SK-N-SH (cell line): ENCODE measurements at regions of chr11 and their contacts with region 1.

Region 1: DNA sequence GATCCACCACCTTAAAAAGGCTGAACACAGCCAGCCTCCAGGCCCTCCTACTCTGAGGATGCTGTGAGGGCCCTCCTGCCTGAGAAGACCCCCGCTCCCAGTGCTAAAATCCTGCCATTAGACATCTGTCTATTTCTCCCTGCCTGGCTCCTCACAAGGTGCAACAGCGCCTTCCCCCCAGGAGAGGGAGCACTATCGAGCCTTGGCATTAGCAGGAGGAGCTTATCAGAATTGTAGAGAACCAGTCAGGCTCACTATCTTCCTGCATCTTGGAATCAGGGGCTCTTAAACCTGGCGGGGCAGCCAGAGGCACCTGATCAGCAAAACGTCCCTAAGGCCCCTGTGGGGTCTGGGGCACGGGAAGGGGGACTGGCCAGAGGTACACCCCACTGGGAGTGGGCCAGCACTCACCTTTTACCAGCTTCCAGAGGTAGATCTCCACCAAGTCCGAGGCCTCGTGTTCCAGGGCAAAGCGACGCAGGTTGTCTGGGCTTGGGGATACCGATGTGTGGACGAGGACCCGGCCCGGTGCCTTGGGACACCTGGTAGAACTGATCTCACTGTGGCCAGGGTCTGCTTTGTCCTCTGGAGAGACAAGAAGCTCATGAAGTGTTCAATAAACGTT is 28.7 kb downstream of the CHRDL2 start:
- DNase-seq: peak; percentile 84
- H3K4me3 ChIP-seq: no peak overlapping the region; a peak in 1 of 4 replicates
- H3K27ac ChIP-seq: no peak overlapping the region
- H3K4me1 ChIP-seq: peaks cover 0 to 8% of the 10 kb centered on the region in 2 experiments; a peak in 1 of 4 replicates
- H3K27me3 ChIP-seq: no peaks in the 10 kb centered on the region
- CTCF ChIP-seq: peak; percentile 88
- EP300 ChIP-seq: no peak
- RAD21 ChIP-seq: peak; percentile 72

Region 2: GRCh38 chr11:74634537-74634936 is 68.0 kb before region 1 on chr11:
- CTCF ChIA-PET with region 1: interaction called, 14 read pairs
- POLR2A ChIA-PET with region 1: no interaction called
- DNase-seq: no peak
- H3K4me3 ChIP-seq: no peak overlapping the region
- H3K27ac ChIP-seq: no peak overlapping the region
- H3K4me1 ChIP-seq: peaks cover 0 to 14% of the 10 kb centered on the region in 2 experiments; a peak in 2 of 4 replicates
- H3K27me3 ChIP-seq: no peaks in the 10 kb centered on the region
- CTCF ChIP-seq: peak; percentile 48
- EP300 ChIP-seq: no peak
- RAD21 ChIP-seq: peak; percentile 48

Region 3: DNA sequence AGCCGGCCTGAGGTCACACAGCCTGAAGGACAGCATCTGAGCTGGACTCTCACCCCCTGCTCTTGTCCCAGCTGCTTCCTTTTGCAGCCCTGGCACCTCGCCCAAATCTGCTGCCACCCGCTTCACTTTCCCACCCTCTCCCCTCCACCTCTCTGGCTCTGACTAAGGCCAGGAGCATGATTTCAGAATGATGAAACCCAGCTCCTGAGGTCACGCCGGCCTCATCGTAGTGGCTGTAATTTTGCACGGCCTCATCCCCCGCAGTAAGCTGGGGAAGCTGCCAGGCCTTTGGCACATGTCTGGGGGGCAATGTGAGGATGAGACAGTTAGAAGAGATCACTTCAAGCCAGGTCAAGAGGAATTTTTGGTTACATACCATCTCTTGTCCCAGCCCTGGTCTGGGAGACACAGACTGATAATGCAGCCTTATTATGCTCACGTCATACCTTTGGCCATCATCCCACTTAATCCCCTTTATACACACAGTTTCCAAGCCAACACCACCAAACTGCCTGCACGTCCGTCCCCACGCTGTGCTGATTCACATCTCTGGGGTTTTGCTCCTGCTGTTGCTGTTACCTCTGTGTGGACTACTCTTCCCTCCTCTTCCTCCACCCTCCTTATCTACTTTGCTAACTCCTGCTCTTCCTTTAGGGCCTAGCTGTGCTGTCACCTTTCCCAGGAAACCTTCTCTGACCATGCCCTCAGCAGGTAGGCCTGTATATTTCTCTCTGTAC is 29.4 kb before region 1 on chr11:
- CTCF ChIA-PET with region 1: interaction called, 10 read pairs
- POLR2A ChIA-PET with region 1: no interaction called
- DNase-seq: peak; percentile 77
- H3K4me3 ChIP-seq: no peak overlapping the region
- H3K27ac ChIP-seq: peak overlapping the region; percentile 56 to 99
- H3K4me1 ChIP-seq: peaks cover 15 to 16% of the 10 kb centered on the region in 2 experiments
- H3K27me3 ChIP-seq: no peaks in the 10 kb centered on the region
- CTCF ChIP-seq: no peak
- EP300 ChIP-seq: peak; percentile 44 to 84; a peak in 1 of 4 replicates
- RAD21 ChIP-seq: no peak

Region 4: GRCh38 chr11:74683279-74683871 is 19.1 kb before region 1 on chr11:
- CTCF ChIA-PET with region 1: interaction called, 58 read pairs
- POLR2A ChIA-PET with region 1: no interaction called
- DNase-seq: peak; percentile 87
- H3K4me3 ChIP-seq: peak overlapping the region in 1 of 2 experiments; percentile 28; a peak in 2 of 4 replicates
- H3K27ac ChIP-seq: no peak overlapping the region
- H3K4me1 ChIP-seq: peaks cover 0 to 5% of the 10 kb centered on the region in 2 experiments; a peak in 1 of 4 replicates
- H3K27me3 ChIP-seq: no peaks in the 10 kb centered on the region
- CTCF ChIP-seq: peak; percentile 34
- EP300 ChIP-seq: no peak
- RAD21 ChIP-seq: no peak

Region 5: DNA sequence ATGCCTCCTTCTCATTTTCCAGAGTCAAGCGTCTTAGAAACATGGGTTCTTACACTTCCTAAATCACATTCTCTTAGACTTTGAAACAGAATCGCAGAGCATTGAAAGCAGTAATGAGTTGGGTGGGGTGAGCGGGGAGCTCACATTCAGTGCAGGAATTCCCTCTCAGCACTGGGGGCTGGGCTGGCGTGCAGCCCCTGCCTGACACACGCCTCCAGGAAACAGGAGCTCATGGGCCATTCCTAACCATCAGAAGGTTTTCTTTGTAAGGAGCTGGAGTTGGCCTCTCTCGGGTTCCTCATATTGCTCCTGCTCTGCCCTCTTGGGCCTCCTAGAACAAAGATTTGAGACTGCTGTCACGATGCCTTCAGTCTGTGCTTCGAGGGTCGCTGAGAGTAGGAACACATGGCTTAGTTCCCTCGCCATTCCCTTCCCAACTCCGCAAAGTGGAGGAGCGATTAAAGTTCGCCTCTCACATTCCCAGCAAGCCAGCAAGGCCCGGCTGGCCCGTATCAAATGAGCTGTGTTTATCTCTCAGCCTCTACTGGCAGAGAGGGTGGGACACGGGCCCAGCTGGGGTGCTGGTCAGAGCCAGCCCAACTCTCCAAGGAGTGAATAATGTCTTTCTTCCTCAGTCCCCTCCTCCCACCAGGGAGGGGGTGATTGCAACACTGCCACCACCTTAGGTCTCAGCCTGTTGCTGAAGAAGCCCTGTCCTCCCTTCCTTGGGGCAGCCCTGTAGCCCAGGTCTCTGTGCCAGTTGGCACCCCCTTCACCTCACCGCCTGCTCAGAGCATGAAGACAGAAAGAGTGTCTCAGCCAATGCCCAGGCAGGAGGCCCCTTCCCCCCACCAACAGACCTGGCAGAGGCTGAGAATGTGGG is 18.3 kb after region 1 on chr11:
- CTCF ChIA-PET with region 1: interaction called, 243 read pairs
- POLR2A ChIA-PET with region 1: no interaction called
- DNase-seq: no peak
- H3K4me3 ChIP-seq: no peak overlapping the region
- H3K27ac ChIP-seq: no peak overlapping the region
- H3K4me1 ChIP-seq: no peaks in the 10 kb centered on the region
- H3K27me3 ChIP-seq: no peaks in the 10 kb centered on the region
- CTCF ChIP-seq: no peak
- EP300 ChIP-seq: no peak
- RAD21 ChIP-seq: no peak

Region 6: DNA sequence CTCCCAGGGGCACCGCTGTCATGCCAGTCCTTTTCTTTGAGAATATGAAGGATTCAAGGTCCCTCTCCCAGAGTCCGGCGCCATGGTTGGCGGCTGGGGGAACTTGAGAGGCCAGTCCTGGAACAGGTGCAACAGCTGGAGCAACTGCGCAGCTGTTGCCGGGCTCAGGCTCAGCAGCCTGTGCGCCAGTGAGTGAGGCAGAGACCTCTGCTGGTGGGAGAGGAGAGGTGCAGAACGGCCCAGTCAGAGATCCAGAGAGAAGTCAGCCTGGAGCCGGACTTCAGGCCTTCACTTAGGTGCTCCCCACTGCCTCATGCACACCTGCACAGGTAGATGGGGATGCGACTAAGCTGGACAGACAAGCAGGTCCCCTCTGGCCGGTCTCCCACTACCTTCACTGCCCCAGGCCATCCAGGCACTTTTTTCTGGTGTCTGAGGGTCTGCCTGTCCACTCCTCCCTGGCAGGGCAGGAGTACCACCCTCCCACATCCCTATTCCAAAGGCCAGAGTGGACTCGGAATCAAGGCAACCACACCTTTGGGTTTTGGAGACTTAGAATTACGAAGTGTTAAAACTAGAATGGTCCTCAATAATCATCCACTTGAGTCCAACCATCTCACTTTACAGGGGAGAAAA is 24.2 kb after region 1 on chr11:
- CTCF ChIA-PET with region 1: interaction called, 243 read pairs
- POLR2A ChIA-PET with region 1: no interaction called
- DNase-seq: peak; percentile 87
- H3K4me3 ChIP-seq: peak overlapping the region in 1 of 2 experiments; percentile 17; a peak in 1 of 4 replicates
- H3K27ac ChIP-seq: no peak overlapping the region
- H3K4me1 ChIP-seq: no peaks in the 10 kb centered on the region; a peak in 1 of 4 replicates
- H3K27me3 ChIP-seq: peaks cover 24% of the 10 kb centered on the region
- CTCF ChIP-seq: peak; percentile 86
- EP300 ChIP-seq: no peak
- RAD21 ChIP-seq: peak; percentile 89

Region 7: DNA sequence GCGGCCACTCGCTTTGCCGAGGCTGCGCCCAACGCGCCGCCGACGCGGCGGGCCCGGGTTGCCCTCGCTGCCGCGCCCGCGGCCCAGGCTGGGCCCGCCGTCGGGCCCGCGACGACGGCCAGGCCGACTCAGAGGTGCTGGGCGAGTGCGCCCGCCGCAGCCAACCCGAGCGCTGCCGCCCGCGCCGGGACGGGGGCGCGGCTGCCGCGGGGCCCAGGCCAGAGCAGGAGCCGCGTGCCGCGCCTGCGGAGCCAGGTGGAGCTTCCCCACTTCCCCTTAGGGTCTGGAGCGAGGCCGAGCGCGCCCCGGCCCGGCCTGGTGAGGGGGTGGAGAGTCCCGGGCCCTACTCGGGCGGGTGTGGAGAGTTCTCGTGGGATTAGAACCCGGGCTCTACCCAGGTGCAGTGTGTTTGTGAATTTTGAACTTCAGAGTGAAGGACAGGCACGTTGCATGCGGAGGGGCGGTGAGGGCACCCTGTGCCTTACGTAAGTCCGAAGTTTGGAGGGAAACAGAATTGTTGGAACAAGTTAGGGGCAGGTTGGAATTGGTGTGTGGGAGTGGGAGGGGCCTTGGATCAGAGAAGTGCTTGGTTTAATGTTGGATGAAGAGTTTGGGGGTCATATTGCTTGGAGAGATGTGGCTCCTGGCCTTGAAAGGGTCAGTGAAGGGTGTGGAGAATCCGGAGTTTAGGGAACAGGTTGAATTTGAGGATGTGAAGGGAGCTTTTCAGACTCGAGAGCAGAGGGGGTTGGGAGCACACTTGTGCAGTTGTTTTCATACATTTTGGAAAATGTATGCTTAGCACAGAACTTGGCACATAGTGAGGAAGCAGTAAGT is 46.9 kb after region 1 on chr11:
- CTCF ChIA-PET with region 1: interaction called, 11 read pairs
- POLR2A ChIA-PET with region 1: no interaction called
- DNase-seq: peak; percentile 86
- H3K4me3 ChIP-seq: peak overlapping the region; percentile 69 to 79
- H3K27ac ChIP-seq: peak overlapping the region; percentile 71 to 82
- H3K4me1 ChIP-seq: peaks cover 11% of the 10 kb centered on the region in 2 experiments; a peak in 3 of 4 replicates
- H3K27me3 ChIP-seq: no peaks in the 10 kb centered on the region
- CTCF ChIP-seq: no peak
- EP300 ChIP-seq: no peak
- RAD21 ChIP-seq: no peak